Activated CD4-positive, alpha-beta T cell treated with anti-CD3 and anti-CD28 coated beads, Interleukin-2, amount 10 ng/mL, durations not matched to agents 24 days and 14 days (primary cell): ENCODE measurements at regions of chr11 and their contacts with region 1.

Region 1: DNA sequence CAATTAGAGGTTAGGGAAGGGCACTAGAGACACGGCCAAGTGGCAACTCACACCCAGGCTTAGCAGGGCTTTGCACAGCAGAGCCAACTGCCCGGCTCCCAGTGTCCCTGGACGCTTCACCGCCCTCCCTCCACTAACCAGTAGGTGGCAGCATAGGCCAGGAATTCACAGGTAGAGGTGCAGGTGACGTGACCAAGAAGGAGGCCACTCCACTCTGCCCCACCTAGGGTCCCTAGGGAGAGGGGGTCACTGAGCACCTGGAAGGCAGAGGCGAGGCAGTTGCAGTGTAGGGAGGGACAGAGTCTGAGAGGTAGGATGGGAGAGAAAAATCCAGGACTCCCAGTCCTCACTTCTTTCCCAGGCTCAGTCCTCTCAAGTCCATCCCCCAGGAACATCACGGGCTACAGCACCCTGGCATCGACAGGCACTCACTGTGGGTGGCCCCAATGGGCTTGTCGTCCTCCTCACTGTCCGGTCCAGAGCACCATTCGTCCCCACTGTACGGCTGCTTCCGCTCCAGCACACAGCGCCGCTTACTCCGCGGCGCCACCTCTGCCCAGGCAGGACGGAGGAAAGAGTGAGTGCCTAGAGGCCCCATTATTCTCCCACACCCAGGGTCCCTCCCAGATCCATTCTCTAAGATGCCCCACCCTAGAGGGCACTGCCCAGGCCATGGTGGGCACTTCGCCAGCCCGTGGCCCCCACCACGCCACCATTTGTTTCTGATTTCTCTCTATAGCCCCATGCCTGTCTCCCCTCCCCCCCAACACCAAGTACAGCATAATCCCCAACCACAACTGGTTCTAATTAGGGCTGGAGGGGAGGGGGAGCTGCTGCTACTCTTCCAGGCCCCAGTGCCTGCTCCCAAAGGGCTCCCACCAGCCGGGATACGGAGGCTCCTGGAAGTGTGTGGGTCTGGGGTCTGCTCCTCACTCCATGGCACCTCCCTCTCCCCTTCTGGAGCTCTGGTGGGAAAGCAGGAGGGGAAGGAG is 18.4 kb downstream of the BCL9L start:
- DNase-seq: peak; percentile 97
- H3K4me3 Mint-ChIP-seq: no peak overlapping the region
- H3K27ac Mint-ChIP-seq: peak overlapping the region; percentile 27
- H3K4me1 Mint-ChIP-seq: peaks cover 35% of the 10 kb centered on the region
- H3K27me3 Mint-ChIP-seq: no peaks in the 10 kb centered on the region

Region 2: DNA sequence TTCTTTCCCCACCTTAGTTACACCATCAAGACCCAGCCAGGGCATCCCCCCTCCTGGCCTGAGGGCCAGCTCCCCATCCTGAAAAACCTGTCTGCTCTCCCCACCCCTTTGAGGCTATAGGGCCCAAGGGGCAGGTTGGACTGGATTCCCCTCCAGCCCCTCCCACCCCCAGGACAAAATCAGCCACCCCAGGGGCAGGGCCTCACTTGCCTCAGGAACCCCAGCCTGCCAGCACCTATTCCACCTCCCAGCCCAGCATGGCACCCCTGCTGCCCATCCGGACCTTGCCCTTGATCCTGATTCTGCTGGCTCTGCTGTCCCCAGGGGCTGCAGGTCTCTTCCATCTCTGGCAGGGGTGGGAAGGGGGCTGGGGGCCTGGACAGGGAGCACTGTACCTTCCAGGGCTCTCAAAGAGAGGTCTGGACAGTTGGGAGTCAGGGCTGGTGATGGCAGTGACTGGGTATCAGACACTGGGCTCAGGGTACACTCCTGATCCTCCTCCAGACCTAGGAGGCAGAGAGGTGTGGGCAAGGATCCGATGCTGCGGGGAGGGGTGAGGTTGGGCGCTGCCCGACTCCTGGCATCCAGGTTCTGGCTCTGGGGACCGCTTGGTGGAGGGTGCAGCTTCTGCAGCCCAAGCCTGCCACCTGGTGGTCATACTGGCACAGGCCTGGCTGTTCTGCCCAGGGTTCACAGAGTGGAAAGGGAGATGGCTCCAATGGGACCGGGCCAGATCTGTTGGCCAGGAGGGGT is 48.9 kb after region 1 on chr11 and contains the start of gene UPK2:
- intact Hi-C with region 1: loop called (anchors 1 kb)
- DNase-seq: peak; percentile 96
- H3K4me3 Mint-ChIP-seq: no peak within 1 kb of the TSS
- H3K27ac Mint-ChIP-seq: no peak within 1 kb of the TSS
- H3K4me1 Mint-ChIP-seq: peaks cover 4% of the 10 kb centered on the region
- H3K27me3 Mint-ChIP-seq: peaks cover 26% of the 10 kb centered on the region
- total RNA-seq, gene UPK2: not detected in 2 replicates

Region 3: DNA sequence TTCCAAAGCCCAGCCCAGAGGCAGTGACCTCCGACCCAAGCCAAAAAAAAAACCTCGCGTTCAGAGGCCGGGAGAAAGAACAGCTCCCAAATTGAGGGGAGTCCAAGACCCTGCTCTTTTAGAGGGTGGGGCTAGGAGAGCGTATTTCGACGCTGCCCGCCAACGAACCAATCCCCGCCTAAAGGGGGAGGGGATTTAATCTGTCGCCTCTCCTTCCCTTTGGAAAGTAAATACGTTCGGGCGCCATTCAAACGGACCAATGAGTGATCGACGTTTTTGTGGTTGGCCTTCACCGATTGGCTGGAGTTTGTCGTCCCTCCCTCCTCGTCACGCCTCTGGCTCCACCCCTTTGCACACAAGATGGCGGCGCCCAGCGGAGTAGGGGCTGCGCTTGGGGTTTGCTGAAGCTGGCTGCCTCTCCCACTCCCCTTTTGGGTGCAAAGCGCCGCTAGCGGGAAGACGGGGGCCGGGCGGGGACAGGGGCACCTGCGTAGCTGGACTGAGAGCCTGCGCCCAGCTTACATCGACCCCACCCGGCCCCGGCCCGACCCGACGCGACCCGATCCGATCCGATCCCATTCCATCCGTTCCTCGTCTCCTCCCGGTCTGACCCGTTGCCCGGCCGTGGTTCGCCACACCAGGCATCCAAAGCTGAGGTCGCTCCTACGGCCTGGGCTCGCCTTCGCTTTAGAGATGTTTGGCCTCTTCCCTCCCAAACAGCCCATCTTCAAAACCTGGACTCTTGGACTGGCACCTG is 427.0 kb after region 1 on chr11 and contains the start of gene RNF26:
- intact Hi-C with region 1: loop called (anchors 5 kb)
- DNase-seq: peak; percentile 99
- H3K4me3 Mint-ChIP-seq: peak within 1 kb of the TSS; percentile 95
- H3K27ac Mint-ChIP-seq: peak within 1 kb of the TSS; percentile 99
- H3K4me1 Mint-ChIP-seq: peaks cover 34% of the 10 kb centered on the region
- H3K27me3 Mint-ChIP-seq: peaks cover 23% of the 10 kb centered on the region
- total RNA-seq, gene RNF26: 26.5 and 26.8 TPM in 2 replicates